A549 (cell line): ENCODE measurements at regions of chr11 and their contacts with region 1.

Region 1: GRCh38 chr11:72144807-72145560 is 9.5 kb downstream of the FOLR3 start:
- DNase-seq: peak in 1 of 2 experiments; percentile 48
- ATAC-seq: 0 out of 6 replicates have a peak, but pooled peaks of 1 of the 2 experiments have one; percentile 22
- H3K4me3 ChIP-seq: no peak overlapping the region
- H3K27ac ChIP-seq: peak overlapping the region in 1 of 2 experiments; percentile 37; a peak in 2 of 6 replicates
- H3K4me1 ChIP-seq: peaks cover 17% of the 10 kb centered on the region; the same call in 2 of the 3 replicates
- CTCF ChIP-seq: no peak
- EP300 ChIP-seq: 0 out of 5 replicates have a peak, but pooled peaks of 1 of the 2 experiments have one; percentile 24
- POLR2A ChIP-seq: no peak
- RAD21 ChIP-seq: no peak

Region 2: DNA sequence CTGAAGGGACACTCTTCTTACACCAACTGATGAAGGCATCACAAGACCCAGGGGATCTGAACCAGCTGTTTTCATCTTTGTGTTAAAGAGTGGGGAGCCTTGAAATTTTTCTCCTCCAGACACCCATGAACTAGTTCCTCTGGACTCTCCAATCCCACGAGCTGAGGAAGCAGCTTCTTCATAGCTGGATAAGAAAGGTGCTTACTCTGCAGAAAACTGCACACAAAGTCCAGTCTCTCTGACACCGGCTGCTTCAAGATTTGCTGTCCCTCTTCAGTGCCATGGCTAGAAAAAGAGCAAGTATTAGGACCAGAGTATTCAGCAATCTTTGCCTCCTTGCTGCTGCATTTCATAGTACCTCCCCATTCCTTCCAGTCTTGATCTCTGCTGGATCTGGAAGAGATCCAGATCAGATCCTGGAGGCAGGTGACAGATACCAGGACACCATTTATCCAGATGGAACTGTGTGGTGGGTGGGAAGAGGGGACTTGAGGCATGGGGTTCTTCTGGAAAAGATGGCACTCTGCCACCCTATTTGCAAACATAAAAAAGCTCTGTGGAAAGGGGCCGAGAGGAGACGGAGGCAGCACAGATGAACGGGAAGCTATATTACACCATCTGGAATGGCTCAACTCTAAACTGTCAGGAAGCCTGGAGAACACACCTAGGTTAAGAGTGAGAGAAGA is 120.8 kb before region 1 on chr11:
- CTCF ChIA-PET with region 1: interaction called, 37 read pairs
- POLR2A ChIA-PET with region 1: no interaction called
- DNase-seq: no peak
- ATAC-seq: no peak
- H3K4me3 ChIP-seq: no peak overlapping the region
- H3K27ac ChIP-seq: peak overlapping the region; percentile 65 to 80; a peak in 5 of 6 replicates
- H3K4me1 ChIP-seq: peaks cover 12% of the 10 kb centered on the region
- CTCF ChIP-seq: no peak
- EP300 ChIP-seq: no peak
- POLR2A ChIP-seq: no peak
- RAD21 ChIP-seq: no peak

Region 3: DNA sequence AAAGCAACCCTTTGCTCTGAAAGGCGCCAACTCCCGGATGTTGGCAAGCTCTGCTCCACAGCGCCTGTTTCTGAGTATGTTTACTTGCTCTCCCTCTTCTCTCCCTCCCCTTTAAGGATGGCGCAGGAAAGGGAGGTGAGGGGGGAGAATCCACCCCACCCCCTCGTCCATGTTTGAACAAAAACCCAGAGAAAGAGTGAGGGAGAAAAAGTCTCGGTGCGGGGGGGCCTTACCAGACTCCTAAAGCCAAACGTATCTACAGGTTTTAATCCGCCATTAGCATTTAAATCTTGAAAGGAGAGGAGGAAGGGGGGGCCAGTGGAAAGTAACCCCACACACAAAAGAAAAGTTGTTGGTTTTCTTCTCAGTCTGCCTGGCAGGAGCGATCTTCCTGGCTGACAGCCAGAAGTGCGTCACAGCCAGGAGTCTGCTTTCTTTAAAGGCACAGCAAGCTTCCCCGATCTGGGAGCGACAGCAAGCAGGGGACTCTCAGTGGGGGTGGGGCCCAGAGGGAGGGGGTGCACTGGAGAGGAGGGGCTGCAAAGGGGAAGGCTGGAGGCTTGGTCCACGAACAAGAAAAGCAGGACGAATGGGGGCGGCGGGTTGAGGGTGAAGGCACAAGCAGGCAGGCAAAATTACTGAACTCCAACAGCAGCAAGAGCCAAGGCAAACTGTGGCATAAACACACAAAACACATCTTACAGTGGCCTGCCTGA is 104.1 kb before region 1 on chr11:
- CTCF ChIA-PET with region 1: interaction called, 14 read pairs
- POLR2A ChIA-PET with region 1: interaction called, 4 read pairs
- DNase-seq: peak; percentile 88 to 90
- ATAC-seq: peak; percentile 82 to 83
- H3K4me3 ChIP-seq: peak overlapping the region; percentile 64
- H3K27ac ChIP-seq: peak overlapping the region; percentile 93
- H3K4me1 ChIP-seq: peaks cover 36% of the 10 kb centered on the region
- CTCF ChIP-seq: no peak
- EP300 ChIP-seq: no peak
- POLR2A ChIP-seq: no peak
- RAD21 ChIP-seq: no peak

Region 4: GRCh38 chr11:72091005-72091691 is 53.8 kb before region 1 on chr11:
- CTCF ChIA-PET with region 1: interaction called, 19 read pairs
- POLR2A ChIA-PET with region 1: no interaction called
- DNase-seq: peak; percentile 67 to 84
- ATAC-seq: peak; percentile 94 to 95
- H3K4me3 ChIP-seq: no peak overlapping the region
- H3K27ac ChIP-seq: peak overlapping the region in 1 of 2 experiments; percentile 29; a peak in 2 of 6 replicates
- H3K4me1 ChIP-seq: peaks cover 6% of the 10 kb centered on the region
- CTCF ChIP-seq: peak; percentile 86
- EP300 ChIP-seq: no peak
- POLR2A ChIP-seq: no peak
- RAD21 ChIP-seq: peak; percentile 75 to 83

Region 5: DNA sequence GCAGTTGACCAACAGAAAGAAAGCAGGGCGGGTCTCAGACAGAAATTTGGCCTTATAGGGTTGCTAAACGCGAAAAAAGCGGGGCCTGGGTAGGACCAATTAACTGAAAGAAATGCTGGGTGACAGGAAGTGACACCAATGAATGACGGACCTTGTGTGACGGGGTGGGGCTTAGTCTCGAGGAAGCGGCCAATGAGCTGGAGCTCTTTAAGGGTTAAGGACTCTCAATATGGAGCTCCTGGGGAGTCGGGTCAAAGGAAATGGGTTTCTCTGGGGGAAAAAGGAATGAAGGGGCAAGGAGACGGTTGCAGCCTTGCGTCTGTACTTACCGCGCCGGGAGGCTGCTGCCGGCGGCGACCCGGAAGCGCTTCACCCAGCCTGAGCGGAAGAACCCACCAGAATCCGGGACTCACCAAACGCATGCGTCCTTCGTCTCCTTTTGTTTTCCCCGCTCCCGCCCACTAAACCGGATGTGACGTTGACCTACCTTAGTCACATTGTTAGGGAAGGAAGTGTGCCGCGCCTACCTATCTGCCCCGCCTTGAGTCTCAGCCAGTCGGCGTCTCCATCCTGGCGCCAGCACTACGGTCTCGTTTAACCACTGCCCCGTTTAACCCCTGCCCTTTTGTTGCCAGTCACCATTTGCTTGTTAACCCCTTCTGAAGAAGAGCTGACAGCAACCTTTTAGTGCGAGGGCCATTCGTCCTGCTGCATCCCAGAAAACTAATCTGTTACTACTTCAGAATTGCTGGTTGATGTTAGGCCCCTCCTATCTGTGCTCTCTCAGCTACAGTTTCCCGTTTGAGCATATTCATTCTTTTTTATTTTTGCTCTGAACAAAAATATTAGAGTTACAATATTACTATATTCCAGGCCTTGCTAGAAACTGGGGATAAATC is 32.4 kb before region 1 on chr11 and contains the start of gene ANAPC15:
- CTCF ChIA-PET with region 1: interaction called, 26 read pairs
- POLR2A ChIA-PET with region 1: interaction called, 9 read pairs
- DNase-seq: peak; percentile 94 to 100
- ATAC-seq: peak; percentile 90 to 95
- H3K4me3 ChIP-seq: peak within 1 kb of the TSS; percentile 51
- H3K27ac ChIP-seq: peak within 1 kb of the TSS; percentile 94 to 97
- H3K4me1 ChIP-seq: peaks cover 9% of the 10 kb centered on the region; the same call in 2 of the 3 replicates
- CTCF ChIP-seq: no peak
- EP300 ChIP-seq: no peak
- POLR2A ChIP-seq: peak; percentile 91
- RAD21 ChIP-seq: no peak; a peak in 1 of 5 replicates
- polyA plus RNA-seq, gene ANAPC15: 48.5 and 88.2 TPM in 2 replicates

Region 6: GRCh38 chr11:72132646-72133045 is 12.3 kb before region 1 on chr11:
- CTCF ChIA-PET with region 1: interaction called, 12 read pairs
- POLR2A ChIA-PET with region 1: no interaction called
- DNase-seq: no peak
- ATAC-seq: no peak
- H3K4me3 ChIP-seq: no peak overlapping the region
- H3K27ac ChIP-seq: no peak overlapping the region
- H3K4me1 ChIP-seq: no peaks in the 10 kb centered on the region
- CTCF ChIP-seq: no peak
- EP300 ChIP-seq: no peak
- POLR2A ChIP-seq: no peak
- RAD21 ChIP-seq: no peak

Region 7: GRCh38 chr11:72179804-72180396 is 34.9 kb after region 1 on chr11:
- CTCF ChIA-PET with region 1: interaction called, 48 read pairs
- POLR2A ChIA-PET with region 1: no interaction called
- DNase-seq: no peak
- ATAC-seq: no peak
- H3K4me3 ChIP-seq: no peak overlapping the region
- H3K27ac ChIP-seq: no peak overlapping the region
- H3K4me1 ChIP-seq: peaks cover 11% of the 10 kb centered on the region; the same call in 2 of the 3 replicates
- CTCF ChIP-seq: no peak
- EP300 ChIP-seq: no peak
- POLR2A ChIP-seq: no peak
- RAD21 ChIP-seq: no peak

Region 8: GRCh38 chr11:72511393-72512047 is 366.5 kb after region 1 on chr11:
- CTCF ChIA-PET with region 1: no interaction called
- POLR2A ChIA-PET with region 1: no interaction called
- DNase-seq: peak in 1 of 2 experiments; percentile 14
- ATAC-seq: no peak
- H3K4me3 ChIP-seq: no peak overlapping the region
- H3K27ac ChIP-seq: no peak overlapping the region
- H3K4me1 ChIP-seq: no peaks in the 10 kb centered on the region
- CTCF ChIP-seq: no peak
- EP300 ChIP-seq: no peak
- POLR2A ChIP-seq: no peak
- RAD21 ChIP-seq: no peak